ENCODE measurements at regions of chr5 and their contacts with region 1.

Region 1: DNA sequence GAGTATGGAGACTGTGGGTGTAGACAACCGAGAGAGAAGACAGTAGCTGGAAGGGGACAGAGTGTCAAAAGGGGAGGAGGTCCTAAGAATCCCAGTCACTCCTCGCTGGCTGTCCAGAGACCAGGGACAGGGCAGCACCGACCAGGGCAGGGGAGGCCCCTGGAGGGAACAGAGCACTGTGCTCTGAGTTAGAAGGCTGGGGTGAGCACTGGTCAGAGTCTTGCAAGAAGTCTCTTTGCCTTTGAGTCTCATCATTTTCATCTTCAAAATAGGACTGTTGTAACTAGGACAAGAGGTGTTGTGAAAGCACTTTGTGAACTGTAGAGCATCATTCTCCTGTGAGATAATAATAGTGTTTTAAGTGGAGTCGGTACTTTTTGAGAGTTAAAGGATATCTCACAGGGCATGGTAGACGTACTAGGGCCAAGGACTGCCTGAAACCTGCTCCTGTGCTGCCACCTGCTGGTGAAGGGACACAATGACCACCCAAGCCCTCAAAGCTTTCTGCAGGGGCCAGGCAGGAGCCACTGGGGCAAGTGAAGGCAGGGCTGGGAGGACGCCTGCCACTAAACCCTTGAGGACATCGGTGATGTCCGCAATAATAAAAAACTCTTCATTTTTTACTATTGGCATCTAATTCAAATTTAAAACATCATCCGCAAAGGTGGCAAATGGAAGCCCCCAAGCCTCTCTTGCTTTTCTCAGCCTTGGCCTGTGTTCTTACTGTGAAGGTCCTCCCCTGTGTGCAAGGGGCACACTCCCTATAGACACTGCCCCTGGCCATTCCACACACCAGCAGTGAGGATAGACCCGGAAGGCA is 28.2 kb downstream of the SLC6A7 start:
- H3K4me3 Mint-ChIP-seq: no peak overlapping the region
- H3K27ac Mint-ChIP-seq: no peak overlapping the region
- H3K4me1 Mint-ChIP-seq: peaks cover 25% of the 10 kb centered on the region
- H3K27me3 Mint-ChIP-seq: peaks cover 39% of the 10 kb centered on the region

Region 2: DNA sequence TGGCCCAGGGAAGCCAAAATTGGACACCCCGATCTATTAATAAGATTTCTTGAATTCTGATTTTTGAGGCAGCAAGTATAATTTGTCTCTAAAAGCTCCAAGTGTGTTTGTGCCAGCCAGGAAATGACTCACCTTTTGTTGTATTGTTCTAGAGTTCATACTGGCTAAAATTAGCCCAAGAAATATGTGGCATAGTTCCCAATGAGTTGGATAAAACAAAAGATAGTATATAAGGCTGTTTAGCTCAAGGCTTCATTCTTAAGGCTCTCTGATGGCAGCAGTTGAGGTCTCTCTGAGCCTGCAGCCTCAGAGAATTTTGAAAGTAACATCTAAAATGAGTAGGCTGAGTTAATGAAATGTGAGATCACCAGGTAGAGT is 195.9 kb before region 1 on chr5:
- intact Hi-C with region 1: loop called (anchors 10 kb)
- H3K4me3 Mint-ChIP-seq: no peak overlapping the region
- H3K27ac Mint-ChIP-seq: no peak overlapping the region
- H3K4me1 Mint-ChIP-seq: peaks cover 5% of the 10 kb centered on the region
- H3K27me3 Mint-ChIP-seq: no peaks in the 10 kb centered on the region

Region 3: GRCh38 chr5:150129813-150130492 is 88.1 kb before region 1 on chr5:
- intact Hi-C with region 1: loop called (anchors 1 kb)
- H3K4me3 Mint-ChIP-seq: no peak overlapping the region
- H3K27ac Mint-ChIP-seq: peak overlapping the region; percentile 42
- H3K4me1 Mint-ChIP-seq: peaks cover 59% of the 10 kb centered on the region
- H3K27me3 Mint-ChIP-seq: peaks cover 7% of the 10 kb centered on the region

Region 4: GRCh38 chr5:150161242-150162141 is 56.6 kb before region 1 on chr5:
- intact Hi-C with region 1: loop called (anchors 1 kb)
- H3K4me3 Mint-ChIP-seq: no peak overlapping the region
- H3K27ac Mint-ChIP-seq: no peak overlapping the region
- H3K4me1 Mint-ChIP-seq: peaks cover 34% of the 10 kb centered on the region
- H3K27me3 Mint-ChIP-seq: peaks cover 37% of the 10 kb centered on the region